Activated CD8-positive, alpha-beta memory T cell treated with anti-CD3 and anti-CD28 coated beads, Interleukin-2, amount 10 ng/mL, durations not matched to agents 7 days and 5 days (primary cell): ENCODE measurements at regions of chr16 and their contacts with region 1.

Region 1: GRCh38 chr16:30032083-30032819 is 1.2 kb upstream of the TLCD3B start:
- DNase-seq: peak; percentile 80
- ATAC-seq: peak; percentile 70
- H3K4me3 Mint-ChIP-seq: no peak overlapping the region
- H3K27ac Mint-ChIP-seq: no peak overlapping the region
- H3K4me1 Mint-ChIP-seq: peaks cover 21% of the 10 kb centered on the region
- H3K27me3 Mint-ChIP-seq: peaks cover 64% of the 10 kb centered on the region

Region 2: GRCh38 chr16:29694384-29695195 is 337.7 kb before region 1 on chr16:
- CTCF ChIA-PET with region 1: interaction called, 40 read pairs
- DNase-seq: no peak
- ATAC-seq: no peak
- H3K4me3 Mint-ChIP-seq: no peak overlapping the region
- H3K27ac Mint-ChIP-seq: no peak overlapping the region
- H3K4me1 Mint-ChIP-seq: peaks cover 10% of the 10 kb centered on the region
- H3K27me3 Mint-ChIP-seq: no peaks in the 10 kb centered on the region

Region 3: DNA sequence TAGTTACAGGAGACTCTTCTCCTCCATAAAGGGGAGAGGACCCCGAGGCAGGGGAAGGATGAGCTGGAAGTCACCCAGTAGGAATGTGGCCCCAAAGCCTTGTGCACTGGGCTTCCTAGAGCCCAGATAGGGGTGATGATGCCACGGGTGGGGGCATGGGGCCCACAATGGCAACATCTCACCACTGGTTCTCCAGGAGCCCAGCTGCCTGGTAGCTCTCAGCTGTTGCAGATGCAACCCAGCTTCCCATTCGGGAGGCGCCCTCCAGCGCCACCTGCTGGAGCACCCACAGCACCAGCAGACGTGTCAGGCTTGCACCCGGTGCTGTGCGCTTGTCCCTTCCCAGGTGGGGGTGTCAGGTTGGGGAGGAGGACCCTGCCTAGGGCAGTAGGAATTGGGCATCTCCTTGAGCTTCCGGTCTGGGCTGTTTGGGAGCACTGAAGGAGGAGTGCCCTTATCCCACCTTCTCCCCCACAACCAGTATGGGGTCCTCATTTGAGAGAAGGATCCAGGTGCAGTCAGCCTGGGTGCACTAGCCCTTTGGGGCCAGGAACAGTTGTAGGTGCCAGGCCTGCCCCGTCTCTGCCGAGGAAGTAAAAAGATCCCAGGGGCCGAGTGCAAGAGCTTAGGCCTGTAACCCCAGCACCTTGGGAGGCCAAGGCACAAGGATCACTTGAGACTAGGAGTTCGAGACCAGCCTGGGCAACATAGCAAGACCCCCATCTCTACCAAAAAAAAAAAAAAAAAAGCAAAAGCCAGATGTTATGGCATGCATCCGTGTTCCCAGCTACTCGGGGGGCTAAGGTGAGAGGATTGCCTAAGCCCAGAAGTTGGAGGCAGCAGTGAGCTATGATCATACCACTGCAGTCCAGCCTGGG is 183.6 kb before region 1 on chr16:
- CTCF ChIA-PET with region 1: interaction called, 20 read pairs
- DNase-seq: peak; percentile 87
- ATAC-seq: peak; percentile 93
- H3K4me3 Mint-ChIP-seq: no peak overlapping the region
- H3K27ac Mint-ChIP-seq: no peak overlapping the region
- H3K4me1 Mint-ChIP-seq: no peaks in the 10 kb centered on the region
- H3K27me3 Mint-ChIP-seq: no peaks in the 10 kb centered on the region

Region 4: DNA sequence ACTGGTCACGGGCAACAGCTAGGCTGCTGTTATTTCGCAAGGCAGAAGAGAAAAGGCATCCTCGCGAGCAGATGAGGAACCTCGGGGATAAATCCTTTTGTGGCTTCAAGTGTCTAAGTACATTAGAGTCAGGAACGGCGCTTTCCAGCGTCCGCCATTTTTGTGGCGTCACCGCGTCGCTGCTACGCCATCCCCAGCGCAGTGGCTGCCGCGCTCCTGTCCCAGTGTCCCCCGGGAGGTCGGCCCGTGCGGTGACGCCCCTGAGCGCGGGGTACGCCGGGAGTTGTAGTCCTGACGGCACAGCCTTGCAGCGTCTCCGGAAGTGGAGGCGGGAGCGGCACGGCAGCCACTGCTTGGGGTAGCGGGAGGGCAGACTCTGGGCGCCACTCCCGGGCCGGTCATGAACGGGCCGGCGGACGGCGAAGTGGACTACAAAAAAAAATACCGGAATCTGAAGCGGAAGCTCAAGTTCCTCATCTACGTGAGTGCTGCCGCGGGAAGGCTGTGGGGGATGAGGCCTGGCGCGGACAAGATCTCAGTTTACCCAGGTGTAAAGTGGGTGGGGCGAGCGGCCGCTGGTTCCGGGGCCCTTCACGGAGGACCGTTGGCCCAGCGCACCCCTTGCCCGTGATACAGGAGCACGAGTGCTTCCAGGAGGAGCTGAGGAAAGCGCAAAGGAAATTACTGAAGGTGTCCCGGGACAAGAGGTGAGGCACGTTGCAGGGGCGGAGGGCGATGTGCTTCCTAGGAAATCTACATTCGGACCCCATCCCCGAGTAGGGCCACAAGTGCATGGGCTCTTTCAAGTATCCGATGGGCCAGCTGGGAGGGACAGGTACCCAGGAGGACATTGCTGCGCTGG is 36.1 kb before region 1 on chr16 and contains the start of gene INO80E:
- CTCF ChIA-PET with region 1: interaction called, 17 read pairs
- DNase-seq: peak; percentile 100
- ATAC-seq: peak; percentile 96
- H3K4me3 Mint-ChIP-seq: peak within 1 kb of the TSS; percentile 98
- H3K27ac Mint-ChIP-seq: peak within 1 kb of the TSS; percentile 99
- H3K4me1 Mint-ChIP-seq: peaks cover 34% of the 10 kb centered on the region
- H3K27me3 Mint-ChIP-seq: no peaks in the 10 kb centered on the region
- total RNA-seq, gene INO80E: 102 to 116 TPM

Region 5: GRCh38 chr16:30018731-30019158 is 13.5 kb before region 1 on chr16:
- CTCF ChIA-PET with region 1: interaction called, 21 read pairs
- DNase-seq: no peak
- ATAC-seq: no peak
- H3K4me3 Mint-ChIP-seq: no peak overlapping the region
- H3K27ac Mint-ChIP-seq: no peak overlapping the region
- H3K4me1 Mint-ChIP-seq: peaks cover 7% of the 10 kb centered on the region
- H3K27me3 Mint-ChIP-seq: peaks cover 24% of the 10 kb centered on the region

Region 6: GRCh38 chr16:30628627-30629540 is 596.6 kb after region 1 on chr16:
- CTCF ChIA-PET with region 1: no interaction called
- DNase-seq: peak; percentile 93
- ATAC-seq: peak; percentile 93
- H3K4me3 Mint-ChIP-seq: peak overlapping the region; percentile 54
- H3K27ac Mint-ChIP-seq: peak overlapping the region; percentile 71
- H3K4me1 Mint-ChIP-seq: peaks cover 17% of the 10 kb centered on the region
- H3K27me3 Mint-ChIP-seq: peaks cover under 1% of the 10 kb centered on the region